Motor neuron (in vitro differentiated cells): ENCODE measurements at regions of chr4 and their contacts with region 1.

Region 1: DNA sequence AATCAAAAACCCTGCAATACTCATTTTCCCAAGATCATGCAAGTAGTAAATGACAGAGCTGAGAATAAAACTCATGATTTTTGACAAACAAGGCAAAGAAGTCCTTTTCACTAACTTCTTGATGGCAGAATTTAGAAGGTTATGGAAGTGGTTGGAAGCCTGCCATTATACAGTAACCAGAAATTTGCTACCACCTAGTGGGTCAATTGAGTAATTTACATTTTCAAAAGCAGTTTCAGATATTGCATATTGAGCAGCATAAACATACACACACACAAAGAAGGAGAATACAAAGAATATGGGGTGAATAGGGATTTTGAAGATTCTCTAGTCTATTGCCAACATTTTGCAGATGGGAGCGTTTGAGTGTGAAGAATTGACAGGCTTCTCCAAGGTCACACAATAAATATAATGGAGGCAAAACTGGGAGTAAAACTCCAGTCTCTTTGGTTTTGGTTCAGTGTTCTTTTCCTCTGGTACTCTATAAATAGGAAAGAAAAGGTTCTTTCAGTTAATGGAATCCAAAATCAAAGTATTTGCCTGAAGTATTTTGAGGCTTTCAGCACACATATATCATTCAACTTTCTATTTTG is 70.2 kb downstream of the GC start:
- ATAC-seq: peak in 4 of 8 experiments; percentile 21 to 53 (median 48)
- H3K4me3 ChIP-seq: no peak overlapping the region
- H3K27ac ChIP-seq: no peak overlapping the region
- H3K4me1 ChIP-seq: no peaks in the 10 kb centered on the region

Region 2: GRCh38 chr4:70637239-70637913 is 1076.3 kb before region 1 on chr4:
- in situ Hi-C with region 1: loop called in 1 of 9 experiments (anchors 25 kb)
- ATAC-seq: peak in 5 of 8 experiments; percentile 85 to 99 (median 98)
- H3K4me3 ChIP-seq: no peak overlapping the region
- H3K27ac ChIP-seq: peak overlapping the region in 1 of 2 donors; percentile 47
- H3K4me1 ChIP-seq: peaks cover 3 to 5% of the 10 kb centered on the region in 2 donors

Region 3: GRCh38 chr4:70651864-70652506 is 1061.7 kb before region 1 on chr4:
- in situ Hi-C with region 1: loop called in 2 of 9 experiments (anchors 25 kb)
- ATAC-seq: peak in 5 of 8 experiments; percentile 33 to 77 (median 53)
- H3K4me3 ChIP-seq: no peak overlapping the region
- H3K27ac ChIP-seq: no peak overlapping the region
- H3K4me1 ChIP-seq: no peaks in the 10 kb centered on the region

Region 4: GRCh38 chr4:71209161-71209560 is 504.5 kb before region 1 on chr4:
- in situ Hi-C with region 1: loop called in 1 of 9 experiments (anchors 25 kb)
- ATAC-seq: no peak
- H3K4me3 ChIP-seq: no peak overlapping the region
- H3K27ac ChIP-seq: no peak overlapping the region
- H3K4me1 ChIP-seq: peaks cover 0 to 4% of the 10 kb centered on the region in 2 donors

Region 5: DNA sequence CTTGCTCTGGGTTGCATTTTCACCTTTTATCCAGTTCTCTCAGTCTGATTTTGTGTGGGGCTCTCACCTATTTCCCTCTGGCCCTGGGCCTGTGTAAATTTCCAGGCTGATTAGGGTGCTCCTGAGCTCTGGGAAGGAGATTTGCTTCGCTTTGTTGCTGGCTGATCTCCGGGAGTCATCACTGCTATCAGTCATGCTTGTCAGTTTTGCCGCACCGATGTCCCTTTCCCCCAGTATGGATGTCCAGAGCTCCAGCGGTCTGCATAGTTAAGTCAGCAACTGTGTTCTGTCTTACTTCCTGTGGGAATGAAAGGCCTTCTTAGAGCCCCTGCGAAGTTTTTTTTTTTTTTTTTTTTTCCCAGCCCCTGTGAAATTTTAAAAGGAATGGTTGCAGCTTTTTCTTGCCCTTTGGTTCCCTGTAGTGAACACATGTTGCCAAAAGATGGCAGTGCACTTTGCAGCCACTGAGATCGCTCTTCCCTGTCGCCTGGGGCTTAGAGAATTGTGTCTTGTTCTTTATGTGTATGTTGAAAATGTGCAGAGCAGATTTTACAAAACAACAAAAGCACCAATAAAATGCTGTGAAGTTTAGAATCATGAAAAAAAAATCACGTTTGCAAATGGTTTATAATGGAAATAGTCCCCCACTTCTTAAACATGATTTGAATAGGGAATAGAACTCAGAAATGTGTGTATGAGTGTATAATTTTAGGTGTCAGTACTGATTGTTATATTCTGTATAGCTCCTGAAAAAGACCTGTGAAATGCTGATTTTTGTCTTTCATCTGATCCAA is 484.0 kb before region 1 on chr4:
- in situ Hi-C with region 1: loop called in 2 of 9 experiments (anchors 10 to 25 kb)
- ATAC-seq: peak; percentile 63 to 81 (median 71)
- H3K4me3 ChIP-seq: peak overlapping the region; percentile 12 to 27 (median 21)
- H3K27ac ChIP-seq: no peak overlapping the region
- H3K4me1 ChIP-seq: peaks cover 18 to 22% of the 10 kb centered on the region in 2 donors